Colonic mucosa (tissue), 4 donors: ENCODE measurements at regions of chr17 and their contacts with region 1.

Region 1: GRCh38 chr17:43367737-43368242 is 31.0 kb upstream of the ARL4D start:
- DNase-seq: no peak
- H3K4me3 ChIP-seq: peak overlapping the region; percentile 51
- H3K27ac ChIP-seq: peak overlapping the region; percentile 99
- H3K4me1 ChIP-seq: no peaks in the 10 kb centered on the region
- H3K27me3 ChIP-seq: no peaks in the 10 kb centered on the region
- CTCF ChIP-seq: no peak

Region 2: GRCh38 chr17:43142153-43142552 is 225.6 kb before region 1 on chr17:
- intact Hi-C with region 1: no loop called
- DNase-seq: no peak
- H3K4me3 ChIP-seq: no peak overlapping the region
- H3K27ac ChIP-seq: no peak overlapping the region
- H3K4me1 ChIP-seq: no peaks in the 10 kb centered on the region
- H3K27me3 ChIP-seq: no peaks in the 10 kb centered on the region
- CTCF ChIP-seq: no peak

Region 3: GRCh38 chr17:43388359-43389045 is 20.7 kb after region 1 on chr17:
- intact Hi-C with region 1: loop called (anchors 2 kb)
- DNase-seq: peak; percentile 96
- H3K4me3 ChIP-seq: peak overlapping the region; percentile 69
- H3K27ac ChIP-seq: peak overlapping the region; percentile 99
- H3K4me1 ChIP-seq: no peaks in the 10 kb centered on the region
- H3K27me3 ChIP-seq: no peaks in the 10 kb centered on the region
- CTCF ChIP-seq: no peak